Psoas muscle (tissue), 8 donors: ENCODE measurements at regions of chr1 and their contacts with region 1.

Region 1: DNA sequence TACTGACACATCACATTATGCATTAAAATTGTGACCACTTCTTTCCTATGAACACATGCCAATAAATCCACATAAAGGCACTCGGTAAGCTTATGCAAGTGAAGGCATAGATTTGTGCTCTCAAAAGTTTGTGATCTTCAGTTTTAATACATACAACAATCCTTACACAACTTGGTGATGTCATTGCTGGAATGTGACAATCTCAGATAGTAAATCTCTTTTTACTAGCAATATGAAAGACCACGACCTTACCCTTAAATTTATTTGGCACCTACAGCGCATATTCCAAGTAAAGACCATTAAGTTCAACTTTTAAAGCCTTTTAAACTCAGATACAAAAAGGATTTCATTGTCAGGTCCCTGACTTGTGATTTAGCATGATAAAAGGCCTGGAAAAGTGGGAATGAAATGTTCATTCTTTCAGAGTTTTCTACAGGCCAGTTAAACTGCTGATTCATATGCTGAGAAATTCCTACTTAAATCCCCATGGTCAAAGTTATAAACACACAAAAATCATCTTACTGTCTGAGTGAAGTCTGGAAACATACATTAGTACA is 157.4 kb downstream of the SIPA1L2 start:
- DNase-seq: no peak
- ATAC-seq: no peak
- H3K4me3 ChIP-seq: no peak overlapping the region
- H3K27ac ChIP-seq: no peak overlapping the region
- H3K4me1 ChIP-seq: peaks cover 32% of the 10 kb centered on the region
- H3K27me3 ChIP-seq: no peaks in the 10 kb centered on the region
- CTCF ChIP-seq: no peak

Region 2: GRCh38 chr1:232435729-232436128 is 36.8 kb before region 1 on chr1:
- intact Hi-C with region 1: loop called in 1 of 2 experiments (anchors 1 kb)
- DNase-seq: no peak
- ATAC-seq: no peak
- H3K4me3 ChIP-seq: no peak overlapping the region
- H3K27ac ChIP-seq: no peak overlapping the region
- H3K4me1 ChIP-seq: peaks cover 16% of the 10 kb centered on the region
- H3K27me3 ChIP-seq: no peaks in the 10 kb centered on the region
- CTCF ChIP-seq: no peak

Region 3: GRCh38 chr1:233015965-233016364 is 543.4 kb after region 1 on chr1:
- intact Hi-C with region 1: no loop called
- DNase-seq: no peak
- ATAC-seq: peak in 1 of 4 donors; percentile 30
- H3K4me3 ChIP-seq: no peak overlapping the region
- H3K27ac ChIP-seq: no peak overlapping the region
- H3K4me1 ChIP-seq: peaks cover 5% of the 10 kb centered on the region
- H3K27me3 ChIP-seq: no peaks in the 10 kb centered on the region
- CTCF ChIP-seq: no peak